Caco-2 (cell line): ENCODE measurements at regions of chr1 and their contacts with region 1.

Region 1: DNA sequence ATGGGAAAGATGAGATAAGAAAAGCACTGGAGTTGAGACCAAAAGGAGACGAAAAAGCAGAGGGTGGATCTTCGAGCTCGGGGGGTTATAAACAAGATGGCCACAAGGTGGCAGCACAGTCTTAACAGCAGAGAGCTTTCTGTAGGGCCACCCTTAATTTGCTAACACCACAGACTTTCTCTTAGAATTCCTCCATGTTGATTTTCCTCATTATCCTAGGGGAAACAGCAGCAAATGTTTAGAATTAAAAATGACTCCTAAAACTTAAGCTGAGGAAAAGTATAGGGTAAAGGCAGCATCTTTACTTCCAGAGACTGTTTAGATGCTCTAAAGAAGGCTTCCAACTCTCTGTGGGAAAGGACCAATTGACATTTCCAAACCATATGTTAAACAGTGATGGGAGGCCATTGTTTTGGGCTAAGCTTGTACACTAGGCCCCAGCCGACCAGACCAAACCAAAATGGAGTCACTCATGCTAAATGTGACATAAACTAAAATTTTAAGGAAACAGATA is 2.5 kb upstream of the APOBEC4 start:
- DNase-seq: peak; percentile 80 to 86
- H3K4me3 ChIP-seq: no peak overlapping the region
- H3K4me3 Mint-ChIP-seq: no peak overlapping the region
- H3K27ac Mint-ChIP-seq: no peak overlapping the region
- H3K4me1 ChIP-seq: peaks cover 31% of the 10 kb centered on the region
- H3K4me1 Mint-ChIP-seq: peaks cover 41% of the 10 kb centered on the region
- H3K27me3 ChIP-seq: no peaks in the 10 kb centered on the region
- H3K27me3 Mint-ChIP-seq: no peaks in the 10 kb centered on the region
- CTCF ChIP-seq: peak; percentile 79 to 85

Region 2: DNA sequence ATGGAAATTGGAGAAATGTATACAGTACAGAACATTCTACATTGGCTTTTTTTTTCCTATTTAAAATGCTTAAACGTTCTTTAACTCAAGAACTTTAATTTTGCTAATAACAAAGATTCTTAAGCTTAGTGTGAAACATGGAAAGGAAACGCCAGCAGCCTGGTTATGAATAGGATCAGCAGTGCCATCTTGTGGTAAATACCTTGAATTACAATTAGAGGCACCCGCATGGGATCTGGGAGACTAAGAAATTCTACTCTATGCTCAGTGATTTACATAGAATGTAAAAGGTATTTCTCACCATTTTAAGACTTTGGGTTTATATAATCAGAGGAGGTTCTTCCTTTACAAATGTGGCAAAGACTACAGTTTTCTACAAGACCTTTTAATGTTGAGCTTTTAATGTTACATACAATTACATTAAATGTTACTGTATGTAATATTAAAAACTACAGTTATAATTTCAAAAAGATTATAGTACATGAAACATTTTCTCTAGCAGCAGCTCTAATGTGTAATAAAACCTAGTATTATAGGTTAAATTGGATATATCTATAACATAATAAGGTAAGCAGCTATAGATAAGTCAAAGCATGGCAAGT is 29.6 kb after region 1 on chr1:
- CTCF ChIA-PET with region 1: interaction called, 31 read pairs
- POLR2A ChIA-PET with region 1: no interaction called
- intact Hi-C with region 1: loop called (anchors 1 kb)
- DNase-seq: peak in 1 of 2 experiments; percentile 64
- H3K4me3 ChIP-seq: no peak overlapping the region
- H3K4me3 Mint-ChIP-seq: no peak overlapping the region
- H3K27ac Mint-ChIP-seq: no peak overlapping the region
- H3K4me1 ChIP-seq: peaks cover 9% of the 10 kb centered on the region; the same call in 1 of the 2 replicates
- H3K4me1 Mint-ChIP-seq: peaks cover 13% of the 10 kb centered on the region
- H3K27me3 ChIP-seq: no peaks in the 10 kb centered on the region
- H3K27me3 Mint-ChIP-seq: no peaks in the 10 kb centered on the region
- CTCF ChIP-seq: peak; percentile 60 to 80

Region 3: GRCh38 chr1:183812686-183813569 is 157.3 kb after region 1 on chr1:
- CTCF ChIA-PET with region 1: no interaction called
- POLR2A ChIA-PET with region 1: no interaction called
- intact Hi-C with region 1: loop called (anchors 5 kb)
- DNase-seq: peak; percentile 68 to 84
- H3K4me3 ChIP-seq: peak overlapping the region; percentile 4
- H3K4me3 Mint-ChIP-seq: peak overlapping the region; percentile 76
- H3K27ac Mint-ChIP-seq: peak overlapping the region; percentile 84
- H3K4me1 ChIP-seq: peaks cover 67% of the 10 kb centered on the region
- H3K4me1 Mint-ChIP-seq: peaks cover 49% of the 10 kb centered on the region
- H3K27me3 ChIP-seq: no peaks in the 10 kb centered on the region
- H3K27me3 Mint-ChIP-seq: no peaks in the 10 kb centered on the region
- CTCF ChIP-seq: no peak

Region 4: DNA sequence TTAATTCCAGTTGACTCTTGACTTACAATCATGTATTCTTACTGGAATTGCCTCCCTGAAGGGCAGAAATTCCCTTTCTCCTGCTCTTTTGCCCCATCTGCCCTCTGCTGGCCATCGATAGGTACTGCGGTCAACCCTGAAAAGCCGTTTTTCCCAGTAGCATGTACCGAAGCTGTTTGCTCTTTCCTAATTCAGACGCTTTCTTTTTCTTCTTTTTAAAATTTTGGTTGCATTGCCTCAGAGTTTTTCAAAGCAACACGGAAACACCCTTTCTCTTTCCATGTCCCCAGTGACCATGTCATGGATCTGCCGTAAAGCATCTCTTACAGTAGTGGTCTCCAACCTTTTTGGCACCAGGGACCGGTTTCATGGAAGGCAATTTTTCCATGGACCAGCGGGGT is 567.0 kb after region 1 on chr1:
- CTCF ChIA-PET with region 1: no interaction called
- POLR2A ChIA-PET with region 1: no interaction called
- intact Hi-C with region 1: loop called (anchors 5 kb)
- DNase-seq: peak in 1 of 2 experiments; percentile 66
- H3K4me3 ChIP-seq: no peak overlapping the region
- H3K4me3 Mint-ChIP-seq: no peak overlapping the region
- H3K27ac Mint-ChIP-seq: no peak overlapping the region
- H3K4me1 ChIP-seq: no peaks in the 10 kb centered on the region
- H3K4me1 Mint-ChIP-seq: peaks cover 6% of the 10 kb centered on the region
- H3K27me3 ChIP-seq: no peaks in the 10 kb centered on the region
- H3K27me3 Mint-ChIP-seq: peaks cover 7% of the 10 kb centered on the region
- CTCF ChIP-seq: peak; percentile 91 to 95